Sigmoid colon (tissue), 7 donors: ENCODE measurements at regions of chr4 and their contacts with region 1.

Region 1: GRCh38 chr4:102500696-102501446 is at the start of gene NFKB1:
- DNase-seq: peak; percentile 82
- H3K4me3 ChIP-seq: peak within 1 kb of the TSS; percentile 74 to 91 (median 82)
- H3K27ac ChIP-seq: peak within 1 kb of the TSS; percentile 97 to 99 (median 98)
- H3K4me1 ChIP-seq: peaks cover 0 to 48% (median 33%) of the 10 kb centered on the region in 4 donors
- H3K27me3 ChIP-seq: no peaks in the 10 kb centered on the region
- CTCF ChIP-seq: no peak
- EP300 ChIP-seq: no peak
- POLR2A ChIP-seq: no peak
- total RNA-seq, gene NFKB1: 23.5 to 29.4 (median 27.7) TPM

Region 2: DNA sequence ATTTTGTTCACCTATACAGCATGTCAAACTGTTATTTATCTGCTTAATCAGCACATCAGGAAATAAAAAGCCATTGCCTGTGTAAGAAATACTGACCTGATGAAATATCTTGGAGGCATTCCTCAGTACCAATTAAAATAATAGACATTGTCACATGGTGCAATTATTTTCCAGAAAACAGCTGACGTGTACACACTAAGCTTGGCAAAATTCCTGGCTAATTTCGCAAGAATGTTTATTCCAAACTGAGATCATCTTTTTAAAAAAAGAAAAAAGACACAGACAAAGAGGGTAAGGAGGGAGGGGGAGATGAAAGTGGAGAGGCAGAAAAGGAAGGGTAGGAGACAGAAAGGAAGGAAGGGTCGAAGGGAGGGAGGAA is 61.6 kb before region 1 on chr4:
- intact Hi-C with region 1: loop called (anchors 2 kb)
- DNase-seq: no peak
- H3K4me3 ChIP-seq: no peak overlapping the region
- H3K27ac ChIP-seq: peak overlapping the region; percentile 32 to 46 (median 42)
- H3K4me1 ChIP-seq: peaks cover 0 to 19% (median 17%) of the 10 kb centered on the region in 4 donors
- H3K27me3 ChIP-seq: no peaks in the 10 kb centered on the region
- CTCF ChIP-seq: no peak
- EP300 ChIP-seq: no peak
- POLR2A ChIP-seq: no peak

Region 3: DNA sequence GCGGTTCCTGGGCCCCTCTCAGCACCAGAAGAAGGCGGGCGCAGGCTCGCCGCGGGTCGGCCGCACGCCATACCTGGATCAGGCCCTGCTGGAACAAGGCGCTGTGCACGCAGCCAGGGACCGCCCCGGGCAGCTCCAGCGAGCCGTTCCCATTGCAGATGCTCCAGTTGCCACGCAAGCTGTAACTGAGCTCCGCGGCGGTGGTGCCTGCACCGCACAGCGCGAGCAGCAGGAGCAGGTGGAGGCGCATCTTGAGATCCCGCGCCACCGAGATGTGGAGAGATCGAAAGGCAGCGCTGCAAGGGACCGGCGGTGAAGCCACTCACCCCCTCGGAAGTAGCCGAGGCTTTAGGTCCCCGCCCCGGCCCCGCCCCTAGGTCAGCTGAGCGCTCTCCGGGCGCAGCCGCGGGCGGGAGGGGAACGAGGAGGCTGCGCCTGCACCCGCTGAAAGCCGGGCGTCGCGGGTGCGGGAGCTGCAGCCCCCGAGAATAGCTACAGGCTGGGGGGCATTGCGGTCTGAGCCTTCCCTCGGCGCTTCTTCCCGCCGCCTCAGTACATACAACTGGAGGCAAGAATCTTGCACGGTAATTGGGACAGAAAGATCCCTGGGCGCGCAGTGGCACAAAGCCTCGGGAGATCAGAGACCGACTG is 259.9 kb after region 1 on chr4 and contains the start of gene MANBA:
- intact Hi-C with region 1: loop called (anchors 5 kb)
- DNase-seq: peak; percentile 90
- H3K4me3 ChIP-seq: peak within 1 kb of the TSS; percentile 52 to 99 (median 84)
- H3K27ac ChIP-seq: peak within 1 kb of the TSS; percentile 78 to 93 (median 82)
- H3K4me1 ChIP-seq: peaks cover 0 to 17% (median 10%) of the 10 kb centered on the region in 4 donors
- H3K27me3 ChIP-seq: no peaks in the 10 kb centered on the region
- CTCF ChIP-seq: no peak
- EP300 ChIP-seq: no peak
- POLR2A ChIP-seq: peak in 1 of 2 donors; percentile 32
- total RNA-seq, gene MANBA: 25.3 to 47.4 (median 44.8) TPM

Region 4: DNA sequence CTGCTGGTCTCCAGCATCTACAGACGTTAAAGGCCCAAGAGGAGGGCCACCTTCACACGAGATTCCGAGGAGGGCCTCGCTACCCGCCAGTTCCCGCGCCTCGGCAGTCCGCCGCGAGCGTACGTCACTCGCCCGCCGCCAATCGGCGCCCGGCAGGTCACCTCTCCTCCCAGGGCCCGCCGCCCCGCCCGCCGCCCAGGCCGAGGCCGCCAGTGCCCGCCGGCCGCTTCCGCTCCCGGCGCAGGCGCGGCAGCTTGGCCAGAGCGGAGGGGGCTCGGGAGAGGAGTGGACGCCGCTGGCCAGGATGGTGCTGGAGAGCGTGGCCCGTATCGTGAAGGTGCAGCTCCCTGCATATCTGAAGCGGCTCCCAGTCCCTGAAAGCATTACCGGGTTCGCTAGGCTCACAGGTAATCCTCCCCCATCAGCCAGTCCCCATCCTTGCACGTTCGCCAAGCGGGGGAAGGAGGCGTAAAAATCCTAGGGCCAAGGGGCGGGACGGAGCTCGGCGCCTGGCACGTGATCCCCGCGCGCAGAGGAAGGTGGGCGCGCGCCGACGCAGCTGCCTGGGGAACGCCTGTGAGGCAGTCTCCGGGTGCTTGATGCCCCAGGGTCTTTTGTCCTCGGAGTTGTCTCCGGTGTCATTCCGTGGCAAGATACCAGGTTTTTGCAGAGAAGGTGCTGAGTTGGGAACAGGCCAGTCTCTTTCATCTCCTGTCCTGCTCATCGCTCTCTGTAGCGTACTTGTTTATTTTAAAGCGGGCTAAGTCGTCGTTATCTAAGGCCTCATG is 368.1 kb after region 1 on chr4 and contains the start of gene CISD2:
- intact Hi-C with region 1: loop called (anchors 5 kb)
- DNase-seq: peak; percentile 96
- H3K4me3 ChIP-seq: peak within 1 kb of the TSS; percentile 55 to 69 (median 67)
- H3K27ac ChIP-seq: peak within 1 kb of the TSS; percentile 90 to 98 (median 94)
- H3K4me1 ChIP-seq: peaks cover 0 to 24% (median 12%) of the 10 kb centered on the region in 4 donors
- H3K27me3 ChIP-seq: no peaks in the 10 kb centered on the region
- CTCF ChIP-seq: no peak
- EP300 ChIP-seq: peak in 1 of 4 donors; percentile 41
- POLR2A ChIP-seq: peak; percentile 80 to 88
- total RNA-seq, gene CISD2: 6.5 to 16.5 (median 12.7) TPM

Region 5: GRCh38 chr4:103099691-103100392 is 599.0 kb after region 1 on chr4 and contains the start of gene BDH2:
- intact Hi-C with region 1: loop called (anchors 5 kb)
- DNase-seq: peak; percentile 81
- H3K4me3 ChIP-seq: peak within 1 kb of the TSS; percentile 21 to 51 (median 44)
- H3K27ac ChIP-seq: peak within 1 kb of the TSS; percentile 55 to 71 (median 68)
- H3K4me1 ChIP-seq: peaks cover 0 to 36% (median 18%) of the 10 kb centered on the region in 4 donors
- H3K27me3 ChIP-seq: no peaks in the 10 kb centered on the region
- CTCF ChIP-seq: peak; percentile 58 to 73 (median 66)
- EP300 ChIP-seq: no peak
- POLR2A ChIP-seq: peak in 1 of 2 donors; percentile 41
- total RNA-seq, gene BDH2: 47.6 to 54.0 (median 50.2) TPM